WTC11 (cell line): ENCODE measurements at regions of chr1 and their contacts with region 1.

Region 1: GRCh38 chr1:226457307-226457712 is 49.4 kb upstream of the PARP1 start:
- DNase-seq: peak; percentile 62
- ATAC-seq: peak; percentile 91
- H3K4me3 Mint-ChIP-seq: no peak overlapping the region
- H3K27ac Mint-ChIP-seq: no peak overlapping the region; the same call in 1 of the 2 replicates
- H3K4me1 Mint-ChIP-seq: peaks cover 20% of the 10 kb centered on the region
- H3K27me3 Mint-ChIP-seq: no peaks in the 10 kb centered on the region
- CTCF ChIP-seq: peak; percentile 70; the same call in 1 of the 2 replicates

Region 2: GRCh38 chr1:226424228-226425003 is 32.9 kb before region 1 on chr1:
- CTCF ChIA-PET with region 1: interaction called, 15 read pairs
- POLR2A ChIA-PET with region 1: no interaction called
- DNase-seq: no peak
- ATAC-seq: peak; percentile 75
- H3K4me3 Mint-ChIP-seq: no peak overlapping the region
- H3K27ac Mint-ChIP-seq: no peak overlapping the region
- H3K4me1 Mint-ChIP-seq: peaks cover 10% of the 10 kb centered on the region
- H3K27me3 Mint-ChIP-seq: no peaks in the 10 kb centered on the region; the same call in 1 of the 2 replicates
- CTCF ChIP-seq: no peak

Region 3: DNA sequence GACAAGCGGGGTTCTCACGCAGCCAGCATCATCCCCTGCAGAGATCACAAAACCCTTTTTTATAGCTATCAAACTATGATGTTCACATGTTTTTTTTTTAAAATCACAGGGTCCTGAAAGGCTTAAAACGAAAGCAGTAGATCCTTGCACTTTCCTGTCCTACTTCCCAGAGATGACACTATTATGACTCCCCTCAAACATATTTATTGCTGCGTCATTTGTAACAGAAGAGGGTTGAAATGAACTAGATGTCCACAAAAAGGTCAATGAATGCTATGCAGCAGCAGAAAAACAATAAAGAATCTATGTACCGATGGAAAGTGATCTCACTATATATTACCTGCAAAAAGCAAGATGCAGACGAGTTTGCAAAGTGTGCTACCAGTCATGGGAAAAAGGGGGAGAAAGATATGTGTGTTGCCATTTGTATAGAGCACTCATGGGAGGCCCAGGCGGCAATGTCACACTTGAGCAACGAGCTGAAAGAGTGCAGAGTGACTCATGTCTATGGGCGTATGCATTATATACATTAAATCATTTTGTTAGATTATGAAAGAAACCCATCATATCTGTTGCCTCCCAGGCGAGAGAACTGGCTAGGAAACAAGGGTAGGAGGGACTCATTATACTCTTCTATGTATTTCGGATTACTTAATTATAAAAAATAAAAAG is 19.5 kb after region 1 on chr1:
- CTCF ChIA-PET with region 1: interaction called, 18 read pairs
- POLR2A ChIA-PET with region 1: no interaction called
- DNase-seq: no peak
- ATAC-seq: no peak
- H3K4me3 Mint-ChIP-seq: no peak overlapping the region
- H3K27ac Mint-ChIP-seq: no peak overlapping the region
- H3K4me1 Mint-ChIP-seq: peaks cover 17% of the 10 kb centered on the region
- H3K27me3 Mint-ChIP-seq: peaks cover 8% of the 10 kb centered on the region; the same call in 1 of the 2 replicates
- CTCF ChIP-seq: no peak

Region 4: DNA sequence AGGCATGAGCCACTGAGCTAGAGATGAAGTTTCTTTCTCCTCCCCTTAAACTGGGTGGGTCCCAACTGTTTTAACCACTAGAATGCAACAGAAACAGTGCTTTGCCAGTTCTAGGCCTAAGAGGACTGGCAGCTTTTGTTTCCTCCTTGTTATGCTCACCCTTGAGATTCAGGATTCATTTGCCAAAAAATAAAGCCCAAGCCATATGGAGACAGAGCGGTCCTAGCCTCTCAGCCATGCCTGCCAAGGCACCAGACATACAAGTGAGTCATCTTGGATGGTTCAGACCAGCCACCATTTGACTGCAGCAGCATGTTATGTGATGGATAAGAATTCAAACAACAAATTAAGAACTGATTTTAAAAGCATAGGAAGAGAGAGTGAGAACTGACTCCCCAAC is 53.1 kb after region 1 on chr1:
- CTCF ChIA-PET with region 1: interaction called, 12 read pairs
- POLR2A ChIA-PET with region 1: no interaction called
- DNase-seq: no peak
- ATAC-seq: no peak
- H3K4me3 Mint-ChIP-seq: no peak overlapping the region
- H3K27ac Mint-ChIP-seq: no peak overlapping the region
- H3K4me1 Mint-ChIP-seq: no peaks in the 10 kb centered on the region
- H3K27me3 Mint-ChIP-seq: peaks cover 27% of the 10 kb centered on the region
- CTCF ChIP-seq: no peak

Region 5: DNA sequence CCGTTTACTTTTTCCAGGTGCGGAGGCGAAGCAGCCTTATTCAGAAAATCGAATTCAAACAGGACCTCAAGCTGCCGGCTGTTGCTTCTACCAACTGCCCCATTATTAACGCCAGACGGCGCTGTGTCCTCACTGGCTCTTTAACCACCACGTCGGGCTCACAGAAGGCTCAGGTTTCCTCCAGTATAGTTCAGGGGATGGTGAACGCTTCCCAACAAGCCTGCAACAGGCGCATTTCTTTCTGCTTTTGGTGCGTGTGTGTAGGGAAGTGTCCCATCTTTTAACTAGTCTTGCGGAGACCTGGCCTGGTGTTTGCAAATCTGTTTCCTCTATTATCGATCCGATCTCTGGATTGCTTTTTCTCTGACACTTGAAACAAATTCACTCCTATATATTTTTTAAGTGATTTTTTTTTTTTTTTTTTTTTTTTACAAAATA is 90.5 kb after region 1 on chr1:
- CTCF ChIA-PET with region 1: interaction called, 32 read pairs
- POLR2A ChIA-PET with region 1: no interaction called
- DNase-seq: peak; percentile 86
- ATAC-seq: peak; percentile 79
- H3K4me3 Mint-ChIP-seq: peak overlapping the region; percentile 50
- H3K27ac Mint-ChIP-seq: no peak overlapping the region
- H3K4me1 Mint-ChIP-seq: peaks cover 23% of the 10 kb centered on the region
- H3K27me3 Mint-ChIP-seq: peaks cover 70% of the 10 kb centered on the region
- CTCF ChIP-seq: peak; percentile 58